ENCODE measurements at regions of chr3 and their contacts with region 1.

Region 1: GRCh38 chr3:136042608-136043221 is 77.2 kb downstream of the PPP2R3A start:
- DNase-seq: peak in 3 of 9 donors; percentile 2 to 14 (median 10)
- ATAC-seq: no peak
- H3K4me3 ChIP-seq: no peak overlapping the region
- H3K4me3 Mint-ChIP-seq: no peak overlapping the region
- H3K27ac ChIP-seq: no peak overlapping the region
- H3K27ac Mint-ChIP-seq: no peak overlapping the region
- H3K4me1 ChIP-seq: no peaks in the 10 kb centered on the region
- H3K4me1 Mint-ChIP-seq: no peaks in the 10 kb centered on the region
- H3K27me3 ChIP-seq: peaks cover 0 to 5% of the 10 kb centered on the region in 2 donors
- H3K27me3 Mint-ChIP-seq: peaks cover 5 to 25% (median 15%) of the 10 kb centered on the region in 5 donors

Region 2: DNA sequence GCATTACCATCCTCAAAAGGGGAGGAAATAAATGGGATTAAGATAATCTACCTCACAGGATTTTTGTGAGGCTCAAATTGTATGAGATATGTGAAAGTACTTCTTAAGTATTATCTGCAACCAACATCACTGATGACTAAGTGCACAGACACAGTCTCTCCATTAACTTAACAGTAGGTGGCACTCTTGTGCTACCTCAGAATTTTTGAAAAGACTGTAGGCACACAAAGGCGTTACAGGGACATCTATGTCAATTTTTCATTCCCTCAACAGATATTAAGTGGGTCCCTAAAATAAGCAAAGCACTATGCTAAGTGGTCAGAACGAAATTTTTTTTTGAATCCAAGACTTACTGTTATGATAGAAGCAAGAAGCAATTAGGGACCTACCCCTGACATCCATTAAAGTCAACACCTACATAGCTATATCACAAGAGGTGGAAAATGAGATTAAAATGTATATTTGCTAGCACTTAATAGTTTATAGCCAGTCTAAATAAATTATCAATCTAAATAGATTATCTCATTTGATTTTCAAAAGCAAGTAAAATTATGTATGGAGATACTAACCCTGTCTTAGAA is 1844.9 kb before region 1 on chr3:
- CTCF ChIA-PET with region 1: no interaction called
- POLR2A ChIA-PET with region 1: no interaction called
- intact Hi-C with region 1: loop called in 1 of 2 experiments (anchors 5 kb)
- DNase-seq: peak in 7 of 9 donors; percentile 24 to 55 (median 42)
- ATAC-seq: peak; percentile 83
- H3K4me3 ChIP-seq: no peak overlapping the region
- H3K4me3 Mint-ChIP-seq: no peak overlapping the region
- H3K27ac ChIP-seq: no peak overlapping the region
- H3K27ac Mint-ChIP-seq: no peak overlapping the region
- H3K4me1 ChIP-seq: no peaks in the 10 kb centered on the region
- H3K4me1 Mint-ChIP-seq: peaks cover 0 to 2% (median 0%) of the 10 kb centered on the region in 7 donors
- H3K27me3 ChIP-seq: no peaks in the 10 kb centered on the region
- H3K27me3 Mint-ChIP-seq: no peaks in the 10 kb centered on the region